Caco-2 (cell line): ENCODE measurements at regions of chr1 and their contacts with region 1.

Region 1: GRCh38 chr1:179930879-179931278 is 23.7 kb upstream of the CEP350 start:
- DNase-seq: peak; percentile 75 to 81
- H3K4me3 ChIP-seq: no peak overlapping the region
- H3K4me3 Mint-ChIP-seq: peak overlapping the region; percentile 34
- H3K27ac Mint-ChIP-seq: no peak overlapping the region
- H3K4me1 ChIP-seq: peaks cover 13% of the 10 kb centered on the region
- H3K4me1 Mint-ChIP-seq: peaks cover 9% of the 10 kb centered on the region
- H3K27me3 ChIP-seq: no peaks in the 10 kb centered on the region
- H3K27me3 Mint-ChIP-seq: peaks cover 16% of the 10 kb centered on the region
- CTCF ChIP-seq: no peak

Region 2: DNA sequence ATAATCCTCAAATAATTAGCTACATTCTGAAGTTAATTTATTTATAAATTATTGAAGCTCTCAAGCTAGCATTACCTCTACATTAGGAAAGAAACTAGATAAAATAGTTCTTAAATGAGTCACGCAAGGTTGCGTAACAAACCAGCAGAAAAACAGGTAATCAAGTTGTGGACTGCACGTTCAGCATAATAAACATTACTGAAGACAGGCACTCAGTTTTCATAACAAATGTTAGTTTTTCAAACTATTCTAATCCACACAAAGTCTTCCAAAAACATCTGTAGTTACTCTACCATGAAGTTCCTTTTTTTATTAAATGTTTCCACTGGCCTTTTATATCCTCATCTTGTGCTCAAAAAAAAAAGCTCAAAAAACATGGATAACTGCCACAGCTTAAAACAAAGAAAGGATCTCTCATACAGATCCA is 54.6 kb before region 1 on chr1:
- CTCF ChIA-PET with region 1: no interaction called
- POLR2A ChIA-PET with region 1: no interaction called
- intact Hi-C with region 1: loop called (anchors 1 kb)
- DNase-seq: peak in 1 of 2 experiments; percentile 68
- H3K4me3 ChIP-seq: peak overlapping the region; percentile 74
- H3K4me3 Mint-ChIP-seq: peak overlapping the region; percentile 84
- H3K27ac Mint-ChIP-seq: peak overlapping the region; percentile 74
- H3K4me1 ChIP-seq: peaks cover 45% of the 10 kb centered on the region
- H3K4me1 Mint-ChIP-seq: peaks cover 19% of the 10 kb centered on the region
- H3K27me3 ChIP-seq: no peaks in the 10 kb centered on the region
- H3K27me3 Mint-ChIP-seq: no peaks in the 10 kb centered on the region
- CTCF ChIP-seq: no peak

Region 3: GRCh38 chr1:179882243-179883039 is 48.4 kb before region 1 on chr1 and contains the start of gene TOR1AIP1:
- CTCF ChIA-PET with region 1: interaction called, 3 read pairs
- POLR2A ChIA-PET with region 1: no interaction called
- intact Hi-C with region 1: loop called (anchors 1 kb)
- DNase-seq: peak; percentile 97
- H3K4me3 ChIP-seq: peak within 1 kb of the TSS; percentile 65
- H3K4me3 Mint-ChIP-seq: peak within 1 kb of the TSS; percentile 95
- H3K27ac Mint-ChIP-seq: peak within 1 kb of the TSS; percentile 100
- H3K4me1 ChIP-seq: peaks cover 10% of the 10 kb centered on the region
- H3K4me1 Mint-ChIP-seq: peaks cover 19% of the 10 kb centered on the region
- H3K27me3 ChIP-seq: no peaks in the 10 kb centered on the region
- H3K27me3 Mint-ChIP-seq: no peaks in the 10 kb centered on the region
- CTCF ChIP-seq: peak; percentile 17 to 60
- total RNA-seq, gene TOR1AIP1: 25.4 and 30.3 TPM in 2 replicates

Region 4: GRCh38 chr1:179954493-179955297 is 23.8 kb after region 1 on chr1 and contains the start of gene CEP350:
- CTCF ChIA-PET with region 1: interaction called, 4 read pairs
- POLR2A ChIA-PET with region 1: no interaction called
- intact Hi-C with region 1: loop called (anchors 1 kb)
- DNase-seq: peak; percentile 98 to 99
- H3K4me3 ChIP-seq: peak within 1 kb of the TSS; percentile 73
- H3K4me3 Mint-ChIP-seq: peak within 1 kb of the TSS; percentile 83
- H3K27ac Mint-ChIP-seq: peak within 1 kb of the TSS; percentile 30
- H3K4me1 ChIP-seq: 0 out of 2 replicates have a peak, but pooled peaks cover 8% of the 10 kb centered on the region
- H3K4me1 Mint-ChIP-seq: peaks cover 14% of the 10 kb centered on the region
- H3K27me3 ChIP-seq: no peaks in the 10 kb centered on the region
- H3K27me3 Mint-ChIP-seq: no peaks in the 10 kb centered on the region
- CTCF ChIP-seq: no peak
- total RNA-seq, gene CEP350: 40.3 and 43.5 TPM in 2 replicates

Region 5: DNA sequence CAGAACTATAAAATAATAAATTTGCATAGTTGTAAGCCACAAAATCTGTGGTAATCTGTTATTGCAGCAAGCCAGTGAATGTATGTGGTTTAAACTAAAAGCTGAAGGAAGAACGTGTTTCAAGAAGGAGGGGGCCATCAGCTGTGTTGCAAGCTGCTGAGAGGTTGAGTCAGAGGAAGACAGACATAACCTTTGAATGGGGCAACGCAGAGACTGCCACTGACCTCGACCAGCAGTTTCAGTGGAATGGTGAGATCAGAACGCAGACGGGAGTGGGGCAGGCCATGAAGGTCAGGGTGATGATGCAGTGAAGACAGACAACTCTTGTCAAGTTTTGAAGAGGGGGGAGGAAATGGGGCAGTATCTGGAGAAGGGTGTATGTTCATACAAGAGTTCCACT is 200.6 kb after region 1 on chr1:
- CTCF ChIA-PET with region 1: no interaction called
- POLR2A ChIA-PET with region 1: no interaction called
- intact Hi-C with region 1: loop called (anchors 1 kb)
- DNase-seq: no peak
- H3K4me3 ChIP-seq: no peak overlapping the region
- H3K4me3 Mint-ChIP-seq: no peak overlapping the region
- H3K27ac Mint-ChIP-seq: no peak overlapping the region
- H3K4me1 ChIP-seq: peaks cover 6% of the 10 kb centered on the region
- H3K4me1 Mint-ChIP-seq: peaks cover 3% of the 10 kb centered on the region
- H3K27me3 ChIP-seq: no peaks in the 10 kb centered on the region
- H3K27me3 Mint-ChIP-seq: peaks cover 4% of the 10 kb centered on the region
- CTCF ChIP-seq: no peak

Region 6: DNA sequence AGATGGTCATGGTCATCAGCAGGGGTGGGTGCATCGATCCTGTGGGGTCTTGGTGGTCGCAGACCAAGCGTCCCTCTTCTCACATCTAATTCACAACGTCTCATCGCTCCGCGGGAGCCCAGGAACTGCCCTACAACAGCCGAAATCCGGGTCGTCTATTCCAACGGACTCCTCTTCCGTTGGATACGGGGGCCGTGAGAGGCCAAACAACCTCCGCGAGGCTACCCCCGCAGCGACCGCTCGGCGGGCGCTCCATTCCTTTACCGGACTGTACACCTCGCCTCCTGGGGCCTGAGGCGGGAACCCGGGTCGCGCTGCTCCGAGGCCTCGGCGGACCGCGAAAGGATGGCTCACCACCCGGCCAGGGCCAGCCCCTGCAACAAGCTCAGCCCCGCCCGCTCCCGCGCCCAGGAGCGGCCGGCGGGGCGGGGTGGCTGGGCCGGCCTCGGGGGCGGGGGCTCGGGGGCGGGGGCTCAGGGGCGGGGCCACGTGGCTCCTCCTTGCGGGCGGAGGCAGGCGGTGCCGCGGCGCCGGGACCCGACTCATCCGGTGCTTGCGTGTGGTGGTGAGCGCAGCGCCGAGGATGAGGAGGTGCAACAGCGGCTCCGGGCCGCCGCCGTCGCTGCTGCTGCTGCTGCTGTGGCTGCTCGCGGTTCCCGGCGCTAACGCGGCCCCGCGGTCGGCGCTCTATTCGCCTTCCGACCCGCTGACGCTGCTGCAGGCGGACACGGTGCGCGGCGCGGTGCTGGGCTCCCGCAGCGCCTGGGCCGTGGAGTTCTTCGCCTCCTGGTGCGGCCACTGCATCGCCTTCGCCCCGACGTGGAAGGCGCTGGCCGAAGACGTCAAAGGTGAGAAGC is 223.7 kb after region 1 on chr1 and contains the start of gene QSOX1:
- CTCF ChIA-PET with region 1: interaction called, 5 read pairs
- POLR2A ChIA-PET with region 1: no interaction called
- intact Hi-C with region 1: loop called (anchors 2 kb)
- DNase-seq: peak; percentile 83
- H3K4me3 ChIP-seq: peak within 1 kb of the TSS; percentile 79
- H3K4me3 Mint-ChIP-seq: peak within 1 kb of the TSS; percentile 92
- H3K27ac Mint-ChIP-seq: peak within 1 kb of the TSS; percentile 87
- H3K4me1 ChIP-seq: peaks cover 46% of the 10 kb centered on the region
- H3K4me1 Mint-ChIP-seq: peaks cover 36% of the 10 kb centered on the region
- H3K27me3 ChIP-seq: no peaks in the 10 kb centered on the region
- H3K27me3 Mint-ChIP-seq: peaks cover 10% of the 10 kb centered on the region
- CTCF ChIP-seq: peak in 1 of 2 experiments; percentile 33
- total RNA-seq, gene QSOX1: 12.1 and 17.0 TPM in 2 replicates